GM12878 (cell line): ENCODE measurements at regions of chr4 and their contacts with region 1.

Region 1: DNA sequence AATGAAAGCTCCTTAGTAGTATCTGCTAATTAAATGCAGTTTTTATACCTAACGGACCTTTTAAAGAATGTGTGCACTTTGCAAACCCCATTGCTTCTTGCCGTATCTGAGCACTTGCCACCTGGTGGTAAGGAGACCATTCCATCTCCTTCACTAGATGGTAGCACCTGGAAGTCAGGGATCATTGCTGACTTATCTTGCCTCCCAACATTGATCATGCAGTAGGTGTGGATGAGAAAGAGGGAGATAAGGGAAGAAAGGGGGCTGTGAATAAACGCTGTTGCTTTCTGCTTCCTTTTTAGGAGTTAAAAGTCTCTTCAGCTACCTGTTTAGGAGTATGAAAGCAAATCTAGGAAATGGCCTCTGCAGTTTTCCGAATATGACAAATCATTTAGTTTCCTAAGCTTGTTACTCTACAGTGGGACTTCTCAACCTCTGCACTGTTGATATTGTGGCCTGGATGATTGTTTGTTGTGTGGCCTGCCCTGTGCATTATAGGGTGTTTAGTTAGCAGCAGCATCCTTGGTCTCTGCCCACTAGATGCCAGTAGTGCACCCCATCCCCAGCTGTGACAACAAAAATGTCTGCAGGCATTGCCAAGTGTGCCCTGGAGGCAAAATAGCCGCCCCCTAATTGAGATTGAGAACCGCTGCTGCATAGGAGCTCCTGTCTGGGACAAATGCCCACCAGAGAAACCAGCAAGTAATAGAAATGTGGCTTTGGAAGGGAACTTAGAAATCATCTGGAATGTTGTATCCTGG is 38.8 kb downstream of the GAB1 start:
- DNase-seq: no peak
- ATAC-seq: peak; percentile 71
- H3K4me3 ChIP-seq: no peak overlapping the region
- H3K27ac ChIP-seq: peak overlapping the region; percentile 5; the same call in 1 of the 2 replicates
- H3K4me1 ChIP-seq: peaks cover 40% of the 10 kb centered on the region
- H3K27me3 ChIP-seq: no peaks in the 10 kb centered on the region
- CTCF ChIP-seq: peak; percentile 68 to 78 (median 78)
- EP300 ChIP-seq: no peak
- POLR2A ChIP-seq: no peak
- RAD21 ChIP-seq: peak; percentile 88

Region 2: GRCh38 chr4:142703694-142704309 is 671.7 kb before region 1 on chr4:
- CTCF ChIA-PET with region 1: no interaction called
- POLR2A ChIA-PET with region 1: no interaction called
- RAD21 ChIA-PET with region 1: no interaction called
- SMC1A ChIA-PET with region 1: no interaction called
- in situ Hi-C with region 1: no loop called
- intact Hi-C with region 1: no loop called
- DNase-seq: no peak
- ATAC-seq: no peak
- H3K4me3 ChIP-seq: no peak overlapping the region
- H3K27ac ChIP-seq: no peak overlapping the region
- H3K4me1 ChIP-seq: no peaks in the 10 kb centered on the region
- H3K27me3 ChIP-seq: no peaks in the 10 kb centered on the region
- CTCF ChIP-seq: no peak
- EP300 ChIP-seq: no peak
- POLR2A ChIP-seq: no peak
- RAD21 ChIP-seq: no peak

Region 3: DNA sequence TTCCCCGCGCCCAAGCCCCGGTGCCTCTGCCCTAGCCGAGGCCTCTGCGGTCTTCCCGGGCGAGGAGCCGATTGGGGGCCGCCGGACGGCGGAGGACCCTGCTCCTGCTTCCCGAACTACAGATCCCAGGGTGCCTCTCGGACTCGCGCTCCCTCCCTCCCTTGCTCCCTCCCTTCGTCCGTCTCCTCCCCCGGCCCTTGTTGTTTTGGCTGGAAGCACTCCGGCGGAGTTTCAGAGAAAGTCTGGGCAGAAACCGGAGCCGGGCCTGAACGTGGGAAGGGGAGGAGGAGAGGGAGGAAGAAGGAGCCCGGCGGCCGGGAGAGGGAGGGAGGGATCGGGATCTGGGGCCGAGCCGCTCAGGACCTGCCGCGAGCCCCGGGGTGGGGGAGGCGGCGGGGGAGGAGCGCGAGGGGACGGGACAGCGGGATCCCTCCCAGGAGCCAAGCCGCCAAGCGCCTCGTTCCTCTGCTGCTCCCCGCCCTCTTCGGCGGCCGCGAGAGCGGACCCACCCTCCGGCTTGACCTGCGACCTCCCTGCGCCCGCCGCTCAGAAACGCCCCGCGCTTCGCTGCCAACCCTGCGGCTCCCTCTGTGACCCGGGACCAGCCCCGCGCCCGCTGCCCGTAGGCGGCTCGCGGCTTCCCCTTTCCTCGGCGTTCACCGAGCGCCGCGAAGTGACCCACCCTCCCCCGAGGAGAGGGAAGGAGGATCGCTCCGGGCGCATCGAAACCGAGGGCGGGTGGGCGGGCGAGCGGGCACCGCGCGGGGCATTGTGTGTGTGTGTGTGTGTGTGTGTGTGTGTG is 39.3 kb before region 1 on chr4:
- CTCF ChIA-PET with region 1: interaction called, 38 read pairs
- POLR2A ChIA-PET with region 1: interaction called, 16 read pairs
- RAD21 ChIA-PET with region 1: interaction called, 63 read pairs
- SMC1A ChIA-PET with region 1: interaction called, 58 read pairs
- in situ Hi-C with region 1: no loop called
- intact Hi-C with region 1: loop called (anchors 1 kb)
- DNase-seq: no peak
- ATAC-seq: peak; percentile 66
- H3K4me3 ChIP-seq: peak overlapping the region; percentile 87
- H3K27ac ChIP-seq: no peak overlapping the region
- H3K4me1 ChIP-seq: no peaks in the 10 kb centered on the region; the same call in 1 of the 2 replicates
- H3K27me3 ChIP-seq: 0 out of 4 replicates have a peak, but pooled peaks cover 1 to 3% of the 10 kb centered on the region in 2 experiments
- CTCF ChIP-seq: no peak
- EP300 ChIP-seq: no peak
- POLR2A ChIP-seq: peak; percentile 41; the same call in 1 of the 2 replicates
- RAD21 ChIP-seq: no peak

Region 4: GRCh38 chr4:143358923-143359643 is 16.4 kb before region 1 on chr4:
- CTCF ChIA-PET with region 1: interaction called, 76 read pairs
- POLR2A ChIA-PET with region 1: interaction called, 10 read pairs
- RAD21 ChIA-PET with region 1: interaction called, 28 read pairs
- SMC1A ChIA-PET with region 1: interaction called, 55 read pairs
- in situ Hi-C with region 1: no loop called
- intact Hi-C with region 1: no loop called
- DNase-seq: no peak
- ATAC-seq: peak; percentile 83
- H3K4me3 ChIP-seq: no peak overlapping the region
- H3K27ac ChIP-seq: peak overlapping the region; percentile 66
- H3K4me1 ChIP-seq: peaks cover 21% of the 10 kb centered on the region
- H3K27me3 ChIP-seq: no peaks in the 10 kb centered on the region
- CTCF ChIP-seq: no peak
- EP300 ChIP-seq: peak; percentile 41 to 67; a peak in 2 of 4 replicates
- POLR2A ChIP-seq: no peak
- RAD21 ChIP-seq: no peak

Region 5: GRCh38 chr4:143406523-143406922 is 31.0 kb after region 1 on chr4:
- CTCF ChIA-PET with region 1: interaction called, 85 read pairs
- POLR2A ChIA-PET with region 1: interaction called, 17 read pairs
- RAD21 ChIA-PET with region 1: interaction called, 87 read pairs
- SMC1A ChIA-PET with region 1: interaction called, 95 read pairs
- in situ Hi-C with region 1: no loop called
- intact Hi-C with region 1: no loop called
- DNase-seq: no peak
- ATAC-seq: no peak
- H3K4me3 ChIP-seq: no peak overlapping the region
- H3K27ac ChIP-seq: no peak overlapping the region
- H3K4me1 ChIP-seq: peaks cover 30% of the 10 kb centered on the region
- H3K27me3 ChIP-seq: peaks cover 0 to 2% of the 10 kb centered on the region in 2 experiments; a peak in 1 of 4 replicates
- CTCF ChIP-seq: no peak
- EP300 ChIP-seq: no peak
- POLR2A ChIP-seq: no peak
- RAD21 ChIP-seq: no peak

Region 6: DNA sequence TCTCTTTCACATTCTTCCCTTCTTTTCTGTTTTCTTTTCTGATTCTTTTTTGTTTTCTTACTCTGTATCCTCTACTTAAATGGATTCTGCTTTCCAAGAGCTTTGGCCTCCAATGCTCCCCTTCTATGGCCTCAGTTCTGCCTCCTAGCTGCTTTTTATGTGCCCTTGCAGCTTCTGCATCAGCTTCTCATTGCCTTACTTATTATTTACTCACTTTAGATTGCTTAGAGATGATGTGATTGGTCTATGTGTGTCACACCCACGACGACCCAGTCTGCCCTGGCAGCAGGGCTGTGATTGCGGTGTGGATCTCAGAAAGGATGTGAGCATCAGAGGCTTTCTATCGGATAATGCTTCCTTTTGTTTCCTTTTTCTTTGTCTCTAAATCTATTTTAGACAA is 66.2 kb after region 1 on chr4:
- CTCF ChIA-PET with region 1: interaction called, 11 read pairs
- POLR2A ChIA-PET with region 1: interaction called, 3 read pairs
- RAD21 ChIA-PET with region 1: interaction called, 6 read pairs
- SMC1A ChIA-PET with region 1: interaction called, 8 read pairs
- in situ Hi-C with region 1: no loop called
- intact Hi-C with region 1: no loop called
- DNase-seq: no peak
- ATAC-seq: no peak
- H3K4me3 ChIP-seq: no peak overlapping the region
- H3K27ac ChIP-seq: no peak overlapping the region
- H3K4me1 ChIP-seq: no peaks in the 10 kb centered on the region
- H3K27me3 ChIP-seq: no peaks in the 10 kb centered on the region
- CTCF ChIP-seq: no peak
- EP300 ChIP-seq: no peak
- POLR2A ChIP-seq: no peak
- RAD21 ChIP-seq: no peak